Activated T-helper 2 cell treated with anti-CD3 and anti-CD28 coated beads, Interferon-gamma antibody, Interleukin-2, Interleukin-4, amounts not matched to agents 10 μg/mL and 5 μg/mL and 100 μg/mL, durations not matched to agents 14 hours and 24 hours and 36 hours (primary cell): ENCODE measurements at regions of chr12 and their contacts with region 1.

Region 1: GRCh38 chr12:66688846-66689439 is 10.1 kb upstream of the GRIP1 start:
- DNase-seq: no peak
- H3K4me3 Mint-ChIP-seq: no peak overlapping the region
- H3K27ac Mint-ChIP-seq: no peak overlapping the region
- H3K4me1 Mint-ChIP-seq: no peaks in the 10 kb centered on the region
- H3K27me3 Mint-ChIP-seq: peaks cover 10% of the 10 kb centered on the region

Region 2: GRCh38 chr12:66860752-66861750 is 172.1 kb after region 1 on chr12:
- intact Hi-C with region 1: loop called (anchors 2 kb)
- DNase-seq: peak; percentile 29
- H3K4me3 Mint-ChIP-seq: no peak overlapping the region
- H3K27ac Mint-ChIP-seq: no peak overlapping the region
- H3K4me1 Mint-ChIP-seq: no peaks in the 10 kb centered on the region
- H3K27me3 Mint-ChIP-seq: peaks cover 17% of the 10 kb centered on the region

Region 3: DNA sequence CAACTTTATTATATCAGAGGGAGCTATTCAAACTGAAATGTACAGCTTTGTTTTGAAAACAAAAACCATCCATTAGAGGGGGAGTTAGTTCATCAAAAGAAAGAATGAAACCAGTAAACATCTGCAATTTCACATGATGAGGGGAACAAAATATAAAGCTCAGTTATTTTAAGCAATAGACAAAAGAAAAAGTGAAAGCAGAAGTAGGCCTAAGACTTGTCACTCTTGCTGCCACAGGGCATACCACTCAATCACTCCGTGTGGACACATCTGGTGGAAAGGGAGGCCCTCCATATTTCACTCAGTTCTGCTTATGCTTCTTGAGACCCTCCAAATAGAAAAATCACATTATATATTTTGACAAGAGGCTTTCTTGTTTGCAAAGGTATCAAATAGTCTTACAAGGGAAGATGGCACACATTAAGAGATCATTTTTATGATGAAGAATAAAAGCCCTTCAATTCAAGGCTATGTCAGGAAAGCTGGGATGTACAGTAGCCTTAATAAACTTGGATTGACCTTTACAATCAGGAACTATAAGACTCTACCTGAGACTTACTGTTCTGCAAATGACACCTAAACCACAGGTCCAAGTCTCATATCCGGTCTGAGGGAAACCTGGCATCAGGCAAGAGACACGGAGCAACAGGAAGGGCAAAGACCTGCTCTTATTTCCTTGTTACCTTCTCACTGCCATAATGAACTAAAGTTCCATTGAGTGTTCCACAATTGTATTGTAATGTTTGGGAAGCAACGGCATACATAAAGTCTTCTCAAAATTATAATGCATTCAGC is 212.4 kb after region 1 on chr12:
- intact Hi-C with region 1: no loop called
- DNase-seq: no peak
- H3K4me3 Mint-ChIP-seq: no peak overlapping the region
- H3K27ac Mint-ChIP-seq: no peak overlapping the region
- H3K4me1 Mint-ChIP-seq: peaks cover 6% of the 10 kb centered on the region
- H3K27me3 Mint-ChIP-seq: peaks cover 4% of the 10 kb centered on the region